ENCODE measurements at regions of chr17 and their contacts with region 1.

Region 1: DNA sequence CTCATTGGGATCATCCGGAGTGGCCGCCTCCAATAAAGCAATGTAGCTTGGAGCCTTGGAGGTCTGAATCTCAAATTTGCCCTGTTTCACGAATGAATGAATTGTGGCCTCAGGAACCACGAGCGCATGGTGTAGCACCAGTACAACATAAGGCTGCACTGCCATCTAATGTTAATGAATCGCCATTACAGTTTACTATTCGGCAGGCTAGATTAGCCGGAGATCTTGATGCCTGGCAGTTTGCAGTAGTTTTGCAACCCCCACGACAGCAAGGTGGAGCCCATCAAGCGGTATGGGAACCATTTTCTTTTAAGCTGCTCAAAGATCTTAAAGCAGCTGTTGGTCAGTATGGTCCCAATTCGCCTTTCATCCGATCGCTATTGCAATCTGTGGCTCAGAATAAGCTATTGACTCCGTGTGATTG is 18.8 kb downstream of the ALOX15B start:
- DNase-seq: peak; percentile 88 to 97
- ATAC-seq: peak; percentile 67 to 93
- H3K4me3 ChIP-seq: peak overlapping the region; percentile 16; the same call in 2 of the 3 replicates
- H3K27ac ChIP-seq: no peak overlapping the region; a peak in 1 of 6 replicates
- H3K4me1 ChIP-seq: peaks cover 6% of the 10 kb centered on the region; the same call in 2 of the 3 replicates
- CTCF ChIP-seq: peak; percentile 93
- EP300 ChIP-seq: no peak
- POLR2A ChIP-seq: no peak
- RAD21 ChIP-seq: peak; percentile 90 to 94

Region 2: DNA sequence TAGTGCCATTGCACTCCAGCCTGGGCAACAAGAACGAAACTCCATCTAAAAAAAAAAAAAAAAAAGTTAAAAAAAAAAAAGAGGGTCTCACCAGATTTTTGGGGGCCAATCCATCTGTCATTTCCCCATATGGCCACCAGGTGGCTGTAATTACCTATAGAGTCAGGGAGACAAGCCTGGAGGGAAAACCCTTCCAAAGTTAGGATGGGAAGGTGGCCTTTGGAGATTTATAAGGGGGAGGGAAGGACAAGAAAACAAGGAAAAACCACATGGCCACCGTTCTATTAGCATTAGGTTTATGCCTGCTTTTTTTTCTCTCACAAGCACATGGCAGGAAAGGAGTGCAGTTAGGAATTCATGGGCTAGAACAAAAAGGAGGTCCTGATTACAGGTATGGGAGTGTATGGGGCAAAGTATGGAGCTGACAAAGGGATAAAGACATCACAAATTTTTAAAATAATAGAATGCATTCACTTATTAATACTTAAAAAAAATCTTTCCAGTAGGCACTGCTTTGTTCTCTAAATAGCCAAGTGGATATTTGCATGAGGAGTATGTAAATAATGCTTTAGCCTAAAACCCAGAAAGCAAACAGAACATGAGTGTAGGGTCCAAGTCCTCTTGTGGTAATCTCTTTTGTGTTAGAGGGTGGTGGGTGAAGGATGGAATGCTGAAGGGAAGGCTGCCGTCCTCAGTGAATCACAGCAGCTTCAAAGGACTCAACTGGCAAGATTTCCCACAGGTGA is 194.8 kb before region 1 on chr17:
- CTCF ChIA-PET with region 1: interaction called, 118 read pairs
- POLR2A ChIA-PET with region 1: no interaction called
- DNase-seq: peak; percentile 65 to 66
- ATAC-seq: no peak
- H3K4me3 ChIP-seq: no peak overlapping the region
- H3K27ac ChIP-seq: no peak overlapping the region
- H3K4me1 ChIP-seq: peaks cover 15% of the 10 kb centered on the region
- CTCF ChIP-seq: peak; percentile 96
- EP300 ChIP-seq: no peak
- POLR2A ChIP-seq: no peak
- RAD21 ChIP-seq: peak; percentile 94 to 97

Region 3: DNA sequence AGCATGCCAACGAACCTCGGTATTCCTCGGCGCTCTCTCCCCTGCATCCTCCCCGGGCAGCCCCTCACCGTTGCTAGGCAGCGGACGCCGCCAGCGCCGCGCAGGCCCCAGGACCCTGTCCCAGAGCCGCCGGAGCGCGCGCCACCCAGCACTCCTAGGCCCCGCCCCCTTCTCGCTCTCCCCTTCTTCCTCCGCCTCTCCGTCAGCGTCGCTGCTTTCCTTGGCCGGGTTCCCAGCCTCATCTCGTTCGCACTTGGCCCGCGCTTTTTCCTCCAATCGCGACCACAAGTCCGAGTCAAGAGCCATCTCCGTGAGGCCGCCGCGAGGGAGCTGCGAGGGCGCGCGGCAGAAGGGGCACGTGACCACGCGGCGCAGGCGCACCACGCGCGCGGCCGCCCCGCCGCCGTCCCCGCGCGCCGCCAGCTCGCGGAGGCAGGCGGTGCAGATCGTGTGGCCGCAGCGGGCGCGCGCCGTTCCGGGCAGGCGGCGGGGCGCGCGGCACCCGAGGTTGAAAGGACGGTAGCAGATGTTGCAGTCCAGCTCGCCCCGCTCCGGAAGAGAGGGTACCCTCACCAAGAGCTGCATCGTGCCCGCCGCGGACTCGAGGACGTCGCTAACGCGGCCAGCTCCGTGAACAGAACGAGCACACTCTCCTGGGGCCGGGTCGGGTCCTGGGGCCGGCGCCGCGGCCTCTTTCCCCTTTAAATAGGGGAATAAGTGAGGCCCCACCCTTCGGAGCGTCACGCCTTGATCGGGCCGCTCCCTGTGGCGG is 141.9 kb before region 1 on chr17 and contains the start of gene RNF227:
- CTCF ChIA-PET with region 1: interaction called, 111 read pairs
- POLR2A ChIA-PET with region 1: interaction called, 3 read pairs
- DNase-seq: peak; percentile 62 to 94
- ATAC-seq: peak; percentile 77 to 80
- H3K4me3 ChIP-seq: peak within 1 kb of the TSS; percentile 48
- H3K27ac ChIP-seq: peak within 1 kb of the TSS; percentile 82 to 92
- H3K4me1 ChIP-seq: peaks cover 13% of the 10 kb centered on the region
- CTCF ChIP-seq: no peak
- EP300 ChIP-seq: no peak
- POLR2A ChIP-seq: peak; percentile 86
- RAD21 ChIP-seq: no peak
- polyA plus RNA-seq, gene RNF227: 2.1 and 2.4 TPM in 2 replicates

Region 4: GRCh38 chr17:7997186-7997585 is 60.5 kb before region 1 on chr17:
- CTCF ChIA-PET with region 1: interaction called, 39 read pairs
- POLR2A ChIA-PET with region 1: no interaction called
- DNase-seq: peak; percentile 67 to 68
- ATAC-seq: peak; percentile 94 to 95
- H3K4me3 ChIP-seq: no peak overlapping the region
- H3K27ac ChIP-seq: no peak overlapping the region
- H3K4me1 ChIP-seq: no peaks in the 10 kb centered on the region
- CTCF ChIP-seq: peak; percentile 70
- EP300 ChIP-seq: no peak
- POLR2A ChIP-seq: no peak
- RAD21 ChIP-seq: peak; percentile 40 to 44; a peak in 3 of 5 replicates

Region 5: DNA sequence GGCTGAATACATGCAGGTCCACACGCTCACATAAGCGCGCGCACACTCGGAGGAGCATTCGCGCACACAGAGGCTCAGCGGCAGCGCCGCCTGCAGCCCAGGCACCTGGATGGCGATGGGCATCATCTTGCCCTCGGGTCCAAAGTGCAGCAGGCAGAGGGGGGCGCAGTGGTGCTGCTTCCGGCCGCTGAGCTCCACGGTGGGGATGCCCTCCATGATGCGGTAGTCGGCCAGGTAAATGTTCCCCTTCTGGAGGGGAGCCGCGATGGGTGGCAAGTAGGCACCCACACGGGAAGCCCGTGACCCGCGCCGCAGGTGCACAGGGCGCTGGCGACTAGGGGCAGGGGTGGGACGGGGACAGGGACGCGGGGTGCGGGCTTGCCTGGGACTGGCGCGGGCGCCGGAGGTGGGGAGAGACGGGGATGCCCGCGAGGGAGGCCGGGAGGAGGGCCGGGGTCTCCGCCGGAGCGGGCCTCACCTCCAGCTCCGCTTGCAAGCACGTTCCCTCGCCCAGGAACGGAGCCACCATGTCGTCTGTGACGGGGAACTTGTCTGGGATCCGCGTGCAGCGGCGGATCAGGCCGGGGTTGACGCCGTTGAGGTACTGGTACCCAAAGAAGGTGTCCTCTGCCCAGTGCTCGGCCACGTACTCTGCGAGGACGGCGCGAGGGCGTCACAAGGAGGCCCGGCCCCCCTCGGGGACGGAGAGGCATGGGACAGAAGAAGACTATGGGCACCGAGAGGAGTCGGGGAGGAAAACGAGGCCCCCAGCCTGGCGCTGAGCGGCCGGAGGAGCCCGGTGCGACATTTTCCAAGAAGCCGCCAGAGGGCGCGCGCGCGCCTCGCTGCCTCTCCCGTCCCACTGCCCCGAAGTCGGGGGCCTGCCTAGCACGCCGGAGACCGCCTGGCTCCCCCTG is 21.8 kb after region 1 on chr17:
- CTCF ChIA-PET with region 1: interaction called, 682 read pairs
- POLR2A ChIA-PET with region 1: interaction called, 11 read pairs
- DNase-seq: peak; percentile 90 to 93
- ATAC-seq: peak; percentile 87 to 92
- H3K4me3 ChIP-seq: peak overlapping the region; percentile 58
- H3K27ac ChIP-seq: peak overlapping the region; percentile 70 to 89
- H3K4me1 ChIP-seq: peaks cover 10% of the 10 kb centered on the region
- CTCF ChIP-seq: peak; percentile 92
- EP300 ChIP-seq: no peak
- POLR2A ChIP-seq: peak; percentile 54
- RAD21 ChIP-seq: peak; percentile 69 to 72

Region 6: DNA sequence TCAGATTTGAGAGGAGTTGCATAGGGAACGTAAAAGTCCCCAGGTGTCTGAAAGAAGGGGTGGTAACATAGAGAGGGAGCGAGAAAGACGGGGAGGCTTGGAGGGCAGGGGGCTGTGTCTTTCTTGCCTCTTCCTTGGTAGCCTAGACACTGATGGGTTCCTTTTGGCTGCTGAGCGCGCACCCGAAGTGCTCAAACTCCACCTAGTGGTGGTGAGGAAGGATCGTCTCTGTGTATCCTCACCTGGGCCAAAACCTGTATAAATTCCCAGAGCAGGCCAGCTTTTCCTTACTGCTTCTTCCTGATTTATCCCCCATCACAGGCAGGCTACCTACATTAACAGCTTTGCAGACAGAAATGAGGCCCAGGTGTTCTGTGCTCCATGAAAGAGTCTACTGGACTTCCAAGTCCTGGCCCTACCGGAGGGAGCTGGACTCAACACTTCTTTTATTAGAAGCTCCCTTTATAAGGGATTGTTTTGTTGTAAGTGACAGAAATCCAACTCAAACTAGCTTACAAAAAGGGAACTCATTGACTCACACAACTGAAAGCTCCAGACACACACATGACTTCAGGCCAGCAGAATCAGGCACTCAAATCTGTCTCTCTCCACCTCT is 243.0 kb after region 1 on chr17:
- CTCF ChIA-PET with region 1: interaction called, 13 read pairs
- POLR2A ChIA-PET with region 1: no interaction called
- DNase-seq: peak; percentile 87 to 94
- ATAC-seq: peak; percentile 95 to 99
- H3K4me3 ChIP-seq: no peak overlapping the region
- H3K27ac ChIP-seq: 0 out of 6 replicates have a peak overlapping the region, but pooled peaks of 1 of the 2 experiments have one; percentile 18
- H3K4me1 ChIP-seq: no peaks in the 10 kb centered on the region
- CTCF ChIP-seq: peak; percentile 94
- EP300 ChIP-seq: no peak
- POLR2A ChIP-seq: no peak
- RAD21 ChIP-seq: peak; percentile 92 to 98

Measured in A549 (cell line).